Aorta (tissue), 5 donors: ENCODE measurements at regions of chr3 and their contacts with region 1.

Region 1: GRCh38 chr3:194930377-194931204 is 244.9 kb downstream of the FAM43A start:
- DNase-seq: peak in 1 of 2 donors; percentile 70
- ATAC-seq: peak; percentile 66
- H3K4me3 ChIP-seq: no peak overlapping the region
- H3K27ac ChIP-seq: peak overlapping the region in 1 of 2 donors; percentile 30
- H3K4me1 ChIP-seq: peaks cover 2 to 3% of the 10 kb centered on the region in 2 donors
- H3K27me3 ChIP-seq: no peaks in the 10 kb centered on the region

Region 2: DNA sequence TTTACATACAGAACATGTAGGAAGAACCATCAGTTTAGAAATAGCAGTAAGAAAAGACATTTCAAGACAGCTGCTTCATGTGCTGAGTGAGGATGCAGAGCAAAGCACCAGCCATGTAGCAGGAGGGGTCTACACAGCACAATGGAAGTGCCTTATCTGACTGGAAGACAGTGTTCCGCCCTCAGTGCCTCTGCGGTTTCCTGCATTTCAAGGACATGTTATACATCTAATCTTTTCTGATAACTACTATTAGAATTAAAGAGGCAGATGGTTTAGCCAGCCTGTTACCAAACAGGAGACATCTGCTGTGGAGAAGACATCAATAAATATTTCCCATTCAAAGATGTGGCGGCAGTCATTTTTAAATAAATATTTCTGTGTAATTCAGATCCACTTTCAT is 269.2 kb before region 1 on chr3:
- intact Hi-C with region 1: loop called in 1 of 2 experiments (anchors 5 kb)
- DNase-seq: no peak
- ATAC-seq: no peak
- H3K4me3 ChIP-seq: no peak overlapping the region
- H3K27ac ChIP-seq: no peak overlapping the region
- H3K4me1 ChIP-seq: no peaks in the 10 kb centered on the region
- H3K27me3 ChIP-seq: no peaks in the 10 kb centered on the region

Region 3: DNA sequence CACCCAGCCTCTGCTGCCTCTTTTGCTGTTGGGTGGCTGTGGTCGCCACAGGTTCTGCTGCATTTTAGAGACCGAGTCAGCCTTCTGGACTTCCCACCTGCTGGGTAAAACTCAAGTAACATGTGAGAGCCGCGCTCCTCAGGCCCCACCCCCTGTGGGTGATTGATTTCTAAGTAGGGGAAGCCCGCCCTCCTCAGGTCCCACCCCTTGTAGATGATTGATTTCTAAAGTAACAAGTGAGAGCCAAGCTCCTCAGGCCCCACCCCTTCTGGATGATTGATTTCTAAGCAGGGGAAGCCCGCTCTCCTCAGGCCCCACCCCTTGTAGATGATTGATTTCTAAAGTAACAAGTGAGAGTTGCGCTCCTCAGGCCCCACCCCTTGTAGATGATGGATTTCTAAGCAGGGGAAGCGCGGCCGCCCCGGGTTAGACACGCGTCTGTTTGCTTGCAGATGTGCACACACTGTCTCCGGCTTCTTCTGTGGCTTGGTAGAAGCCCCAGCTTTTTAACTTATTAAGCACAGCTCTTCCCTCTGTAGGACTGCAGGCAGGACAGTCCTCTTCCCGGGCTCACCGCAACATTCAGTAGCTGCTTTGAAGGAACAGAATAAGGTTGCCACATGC is 161.5 kb before region 1 on chr3:
- intact Hi-C with region 1: no loop called
- DNase-seq: peak; percentile 91 to 96
- ATAC-seq: peak; percentile 95
- H3K4me3 ChIP-seq: peak overlapping the region in 1 of 2 donors; percentile 1
- H3K27ac ChIP-seq: no peak overlapping the region
- H3K4me1 ChIP-seq: no peaks in the 10 kb centered on the region
- H3K27me3 ChIP-seq: no peaks in the 10 kb centered on the region

Region 4: GRCh38 chr3:194787072-194787471 is 143.5 kb before region 1 on chr3:
- intact Hi-C with region 1: no loop called
- DNase-seq: no peak
- ATAC-seq: no peak
- H3K4me3 ChIP-seq: no peak overlapping the region
- H3K27ac ChIP-seq: no peak overlapping the region
- H3K4me1 ChIP-seq: no peaks in the 10 kb centered on the region
- H3K27me3 ChIP-seq: no peaks in the 10 kb centered on the region

Region 5: DNA sequence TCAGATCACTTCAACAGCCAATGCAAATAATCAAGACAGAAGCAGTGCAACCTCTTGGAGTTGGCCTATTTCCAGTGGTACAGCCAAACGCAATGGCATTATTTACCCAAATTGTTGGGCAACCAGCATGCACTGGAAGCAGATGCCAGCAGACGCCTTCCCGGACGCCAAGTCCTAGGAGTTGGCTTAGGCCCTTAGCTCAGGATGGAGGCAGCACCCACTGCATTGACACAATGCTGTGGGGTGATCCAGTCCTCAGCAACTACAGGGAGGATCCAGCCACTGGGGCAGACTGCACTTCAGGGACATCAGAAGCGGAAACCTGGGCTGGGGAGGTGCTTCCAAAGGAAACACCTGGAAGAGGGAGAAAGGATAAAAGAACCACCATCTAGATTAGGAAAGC is 45.5 kb after region 1 on chr3:
- intact Hi-C with region 1: loop called in 1 of 2 experiments (anchors 5 kb)
- DNase-seq: peak; percentile 74 to 85
- ATAC-seq: peak; percentile 77
- H3K4me3 ChIP-seq: no peak overlapping the region
- H3K27ac ChIP-seq: peak overlapping the region; percentile 16 to 65
- H3K4me1 ChIP-seq: no peaks in the 10 kb centered on the region
- H3K27me3 ChIP-seq: no peaks in the 10 kb centered on the region